CD14-positive monocyte (primary cell): ENCODE measurements at regions of chr10 and their contacts with region 1.

Region 1: DNA sequence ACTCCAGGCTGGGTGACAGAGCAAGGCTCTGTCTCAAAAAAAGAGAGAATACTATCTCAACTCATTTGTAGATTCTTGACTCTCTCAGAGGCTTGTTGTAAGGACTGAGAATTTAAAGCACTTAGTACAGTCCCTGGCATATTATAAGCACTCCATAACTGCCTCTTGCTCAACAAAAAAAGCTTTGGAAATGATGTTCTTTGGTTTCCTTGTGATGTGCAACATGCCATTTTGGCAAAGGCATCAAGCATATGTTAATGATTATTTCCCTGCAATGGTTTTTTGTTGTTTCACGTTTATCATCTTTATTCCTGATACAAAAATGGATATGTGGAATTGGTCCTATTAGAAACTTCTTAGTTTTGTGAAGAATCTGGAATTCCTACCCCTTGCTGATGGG is 15.7 kb downstream of the NOLC1 start:
- DNase-seq: no peak
- H3K4me3 ChIP-seq: no peak overlapping the region
- H3K4me3 Mint-ChIP-seq: no peak overlapping the region
- H3K27ac ChIP-seq: no peak overlapping the region
- H3K27ac Mint-ChIP-seq: no peak overlapping the region
- H3K4me1 ChIP-seq: peaks cover 9 to 10% of the 10 kb centered on the region in 2 donors
- H3K4me1 Mint-ChIP-seq: peaks cover 9% of the 10 kb centered on the region
- H3K27me3 ChIP-seq: no peaks in the 10 kb centered on the region
- H3K27me3 Mint-ChIP-seq: peaks cover 1 to 16% (median 2%) of the 10 kb centered on the region in 3 donors
- CTCF ChIP-seq: no peak

Region 2: GRCh38 chr10:101903827-101904550 is 263.9 kb before region 1 on chr10:
- intact Hi-C with region 1: no loop called
- DNase-seq: no peak
- H3K4me3 ChIP-seq: no peak overlapping the region
- H3K4me3 Mint-ChIP-seq: no peak overlapping the region
- H3K27ac ChIP-seq: no peak overlapping the region
- H3K27ac Mint-ChIP-seq: no peak overlapping the region
- H3K4me1 ChIP-seq: peaks cover 0 to under 1% of the 10 kb centered on the region in 2 donors
- H3K4me1 Mint-ChIP-seq: peaks cover 3% of the 10 kb centered on the region
- H3K27me3 ChIP-seq: no peaks in the 10 kb centered on the region
- H3K27me3 Mint-ChIP-seq: no peaks in the 10 kb centered on the region
- CTCF ChIP-seq: no peak

Region 3: DNA sequence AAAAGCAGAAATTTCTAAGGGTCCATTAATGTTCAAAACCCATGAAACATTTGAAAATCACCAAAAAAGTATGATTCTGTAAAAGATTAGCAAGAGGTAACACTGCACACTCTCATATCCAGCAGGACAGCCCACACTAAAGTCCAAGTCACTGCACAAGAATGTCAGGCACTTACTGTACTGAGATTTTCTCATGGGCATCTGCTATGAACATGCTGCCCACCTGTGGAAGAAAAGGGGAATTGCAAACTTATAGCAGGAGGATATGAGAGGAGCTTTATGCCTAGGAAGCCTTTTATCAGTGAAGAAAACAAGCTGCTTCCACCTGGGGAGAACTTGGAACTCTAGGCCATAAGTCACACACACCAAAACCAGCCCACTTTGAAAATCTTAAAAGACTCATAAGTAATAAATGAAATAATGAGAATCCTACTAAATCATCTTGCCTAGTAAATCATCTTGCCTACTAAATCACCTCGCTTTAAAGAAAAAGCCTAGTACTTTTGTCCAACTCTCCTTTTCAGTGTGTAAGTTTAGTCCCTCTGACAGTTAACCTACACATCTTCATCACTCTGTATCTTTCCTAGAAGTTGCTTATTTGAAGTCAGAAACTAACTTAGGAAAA is 157.9 kb before region 1 on chr10:
- intact Hi-C with region 1: no loop called
- DNase-seq: peak; percentile 53 to 68 (median 63)
- H3K4me3 ChIP-seq: no peak overlapping the region
- H3K4me3 Mint-ChIP-seq: no peak overlapping the region
- H3K27ac ChIP-seq: peak overlapping the region in 1 of 2 donors; percentile 52
- H3K27ac Mint-ChIP-seq: peak overlapping the region in 1 of 7 donors; percentile 57
- H3K4me1 ChIP-seq: peaks cover 25 to 26% of the 10 kb centered on the region in 2 donors
- H3K4me1 Mint-ChIP-seq: peaks cover 34% of the 10 kb centered on the region
- H3K27me3 ChIP-seq: no peaks in the 10 kb centered on the region
- H3K27me3 Mint-ChIP-seq: no peaks in the 10 kb centered on the region
- CTCF ChIP-seq: peak; percentile 84

Region 4: DNA sequence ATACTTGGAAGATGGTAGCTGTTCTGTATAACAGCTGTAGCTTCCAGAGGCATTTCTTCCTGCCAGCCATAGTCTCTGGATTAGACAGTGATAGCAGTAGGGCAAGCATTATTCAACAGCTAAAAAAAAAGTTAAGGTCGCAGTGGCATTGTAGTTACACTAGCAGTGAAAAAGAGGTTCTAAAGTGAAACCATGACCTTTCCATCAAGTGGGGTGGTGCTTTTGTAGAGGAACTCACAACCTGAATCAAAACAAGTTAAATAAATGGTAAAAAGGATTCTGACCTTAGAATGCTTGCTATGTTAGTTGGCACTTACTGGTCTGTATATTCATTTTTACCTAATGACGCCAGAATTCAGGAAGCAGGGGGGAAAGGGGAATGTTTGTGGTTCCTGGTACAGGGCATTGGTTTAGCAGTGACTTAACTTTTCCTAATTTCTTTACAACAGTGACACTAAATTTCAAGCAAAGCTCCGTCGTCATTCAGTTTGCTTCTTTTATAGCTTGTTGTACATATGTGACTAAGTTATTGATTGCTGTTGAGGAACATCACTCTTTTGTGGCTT is 132.5 kb after region 1 on chr10:
- intact Hi-C with region 1: no loop called
- DNase-seq: no peak
- H3K4me3 ChIP-seq: no peak overlapping the region
- H3K4me3 Mint-ChIP-seq: no peak overlapping the region
- H3K27ac ChIP-seq: peak overlapping the region in 1 of 2 donors; percentile 13
- H3K27ac Mint-ChIP-seq: no peak overlapping the region
- H3K4me1 ChIP-seq: no peaks in the 10 kb centered on the region
- H3K4me1 Mint-ChIP-seq: peaks cover 6% of the 10 kb centered on the region
- H3K27me3 ChIP-seq: no peaks in the 10 kb centered on the region
- H3K27me3 Mint-ChIP-seq: no peaks in the 10 kb centered on the region
- CTCF ChIP-seq: no peak

Region 5: GRCh38 chr10:102352066-102352715 is 184.3 kb after region 1 on chr10:
- intact Hi-C with region 1: loop called (anchors 2 to 5 kb)
- DNase-seq: peak; percentile 37 to 53 (median 46)
- H3K4me3 ChIP-seq: no peak overlapping the region
- H3K4me3 Mint-ChIP-seq: no peak overlapping the region
- H3K27ac ChIP-seq: no peak overlapping the region
- H3K27ac Mint-ChIP-seq: peak overlapping the region in 1 of 7 donors; percentile 59
- H3K4me1 ChIP-seq: no peaks in the 10 kb centered on the region
- H3K4me1 Mint-ChIP-seq: no peaks in the 10 kb centered on the region
- H3K27me3 ChIP-seq: no peaks in the 10 kb centered on the region
- H3K27me3 Mint-ChIP-seq: peaks cover 0 to 2% (median 0%) of the 10 kb centered on the region in 3 donors
- CTCF ChIP-seq: peak; percentile 97

Region 6: GRCh38 chr10:102485093-102485784 is 317.4 kb after region 1 on chr10:
- intact Hi-C with region 1: loop called in 1 of 2 experiments (anchors 10 kb)
- DNase-seq: no peak
- H3K4me3 ChIP-seq: no peak overlapping the region
- H3K4me3 Mint-ChIP-seq: no peak overlapping the region
- H3K27ac ChIP-seq: no peak overlapping the region
- H3K27ac Mint-ChIP-seq: peak overlapping the region in 2 of 7 donors; percentile 51 to 70
- H3K4me1 ChIP-seq: no peaks in the 10 kb centered on the region
- H3K4me1 Mint-ChIP-seq: no peaks in the 10 kb centered on the region
- H3K27me3 ChIP-seq: no peaks in the 10 kb centered on the region
- H3K27me3 Mint-ChIP-seq: no peaks in the 10 kb centered on the region
- CTCF ChIP-seq: no peak